ENCODE measurements at regions of chr11 and their contacts with region 1.

Region 1: DNA sequence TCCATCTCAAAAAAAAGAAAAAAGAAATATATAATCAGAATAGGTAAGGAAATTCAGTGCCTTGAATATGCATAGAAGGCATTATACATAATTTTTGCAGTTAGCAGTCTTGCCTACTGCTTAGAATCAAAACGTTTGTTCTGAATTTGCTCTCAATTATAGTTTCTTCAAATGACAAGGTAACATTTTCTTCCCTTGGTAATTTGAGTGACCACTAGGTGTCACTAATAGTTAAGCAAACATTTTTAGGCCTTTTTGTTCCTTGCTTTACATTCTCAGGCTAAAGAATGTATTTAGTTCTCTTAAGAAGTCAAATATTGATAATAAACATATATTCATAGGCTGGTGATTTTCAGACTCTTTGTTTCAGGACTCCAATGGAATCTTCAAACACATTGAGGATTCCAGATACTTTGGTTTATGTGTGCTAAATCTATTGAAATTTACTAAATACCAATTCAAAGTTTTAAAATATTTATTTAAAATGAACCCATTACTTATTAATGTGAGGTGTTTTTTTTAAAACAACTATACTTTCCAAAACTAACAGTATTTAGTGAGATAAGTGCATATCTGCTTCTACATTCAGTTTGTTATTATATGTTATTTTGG is 55.0 kb upstream of the DEPDC7 start:
- DNase-seq: peak in 2 of 4 donors; percentile 33 to 55
- ATAC-seq: peak; percentile 62
- H3K4me3 ChIP-seq: no peak overlapping the region
- H3K27ac ChIP-seq: no peak overlapping the region
- H3K4me1 ChIP-seq: no peaks in the 10 kb centered on the region
- H3K27me3 ChIP-seq: no peaks in the 10 kb centered on the region
- CTCF ChIP-seq: peak; percentile 58 to 64

Region 2: DNA sequence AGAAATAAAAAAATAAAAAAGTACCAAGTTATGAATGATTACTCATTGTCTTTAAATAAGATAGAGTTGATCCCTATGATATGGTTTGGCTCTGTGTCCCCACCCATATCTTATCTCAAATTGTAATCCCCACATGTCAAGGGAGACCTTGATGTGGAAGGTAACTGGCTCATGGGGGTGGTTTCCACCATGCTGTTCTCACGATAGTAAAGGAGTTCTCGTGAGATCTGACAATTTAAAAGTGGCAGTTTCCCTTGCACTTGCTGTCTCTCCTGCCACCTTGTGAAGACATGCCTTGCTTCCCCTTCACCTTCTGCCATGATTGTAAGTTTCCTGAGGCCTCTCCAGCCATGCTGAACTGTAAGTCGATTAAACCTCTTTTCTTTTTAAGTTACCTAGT is 49.2 kb before region 1 on chr11:
- intact Hi-C with region 1: no loop called
- DNase-seq: no peak
- ATAC-seq: no peak
- H3K4me3 ChIP-seq: no peak overlapping the region
- H3K27ac ChIP-seq: no peak overlapping the region
- H3K4me1 ChIP-seq: no peaks in the 10 kb centered on the region
- H3K27me3 ChIP-seq: no peaks in the 10 kb centered on the region
- CTCF ChIP-seq: no peak

Region 3: GRCh38 chr11:33065445-33066178 is 105.0 kb after region 1 on chr11:
- intact Hi-C with region 1: loop called in 1 of 2 experiments (anchors 2 kb)
- DNase-seq: peak; percentile 34 to 90 (median 64)
- ATAC-seq: peak; percentile 95
- H3K4me3 ChIP-seq: no peak overlapping the region
- H3K27ac ChIP-seq: no peak overlapping the region
- H3K4me1 ChIP-seq: peaks cover 0 to 26% of the 10 kb centered on the region in 2 donors
- H3K27me3 ChIP-seq: no peaks in the 10 kb centered on the region
- CTCF ChIP-seq: peak; percentile 80 to 85